PC-9 (cell line): ENCODE measurements at regions of chr2 and their contacts with region 1.

Region 1: DNA sequence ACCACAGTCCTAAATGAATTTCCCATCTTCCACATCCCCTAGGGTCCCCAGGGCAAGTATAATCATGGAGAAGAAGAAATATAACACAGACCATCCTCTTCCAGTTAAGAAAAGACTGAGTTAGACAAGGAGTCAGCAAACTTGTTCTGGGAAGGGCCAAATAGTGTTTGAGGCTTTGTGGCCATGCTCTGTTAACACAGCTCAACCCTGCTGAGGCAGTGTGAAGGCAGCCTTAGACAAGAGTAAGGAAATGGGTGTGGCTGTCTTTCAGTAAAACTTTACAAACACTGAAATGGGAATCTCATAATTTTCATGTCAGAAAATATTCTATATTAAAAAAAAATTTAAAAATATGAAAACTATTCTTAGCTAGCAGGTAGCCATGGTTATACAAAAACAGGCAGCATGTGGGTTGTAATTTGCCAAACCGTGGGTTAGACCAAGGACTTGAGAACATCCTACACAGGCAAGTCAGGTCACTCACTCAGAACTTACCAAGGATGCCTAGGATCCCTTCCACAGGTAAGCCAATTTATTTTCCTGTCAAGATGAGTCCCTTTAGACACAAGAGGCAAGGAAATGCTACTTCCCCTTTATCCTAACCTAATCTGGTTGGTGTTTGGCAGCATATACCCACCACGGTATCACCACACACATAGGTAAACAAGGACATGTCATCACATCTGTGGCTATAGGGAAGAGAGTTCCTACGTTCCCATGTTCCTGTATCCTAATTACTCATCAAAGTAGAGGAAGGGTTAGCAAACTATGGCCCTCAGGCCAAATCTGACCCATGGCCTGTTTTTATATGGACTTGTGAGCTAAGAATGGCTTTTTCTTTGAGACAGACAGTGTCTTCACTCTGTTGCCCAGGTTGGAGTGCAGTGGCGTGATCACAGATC is 31.9 kb downstream of the C2orf74 start:
- DNase-seq: peak in 1 of 2 experiments; percentile 84
- H3K4me3 ChIP-seq: no peak overlapping the region
- H3K27ac ChIP-seq: peak overlapping the region; percentile 70
- H3K4me1 ChIP-seq: peaks cover 17% of the 10 kb centered on the region
- H3K27me3 ChIP-seq: no peaks in the 10 kb centered on the region
- CTCF ChIP-seq: no peak

Region 2: DNA sequence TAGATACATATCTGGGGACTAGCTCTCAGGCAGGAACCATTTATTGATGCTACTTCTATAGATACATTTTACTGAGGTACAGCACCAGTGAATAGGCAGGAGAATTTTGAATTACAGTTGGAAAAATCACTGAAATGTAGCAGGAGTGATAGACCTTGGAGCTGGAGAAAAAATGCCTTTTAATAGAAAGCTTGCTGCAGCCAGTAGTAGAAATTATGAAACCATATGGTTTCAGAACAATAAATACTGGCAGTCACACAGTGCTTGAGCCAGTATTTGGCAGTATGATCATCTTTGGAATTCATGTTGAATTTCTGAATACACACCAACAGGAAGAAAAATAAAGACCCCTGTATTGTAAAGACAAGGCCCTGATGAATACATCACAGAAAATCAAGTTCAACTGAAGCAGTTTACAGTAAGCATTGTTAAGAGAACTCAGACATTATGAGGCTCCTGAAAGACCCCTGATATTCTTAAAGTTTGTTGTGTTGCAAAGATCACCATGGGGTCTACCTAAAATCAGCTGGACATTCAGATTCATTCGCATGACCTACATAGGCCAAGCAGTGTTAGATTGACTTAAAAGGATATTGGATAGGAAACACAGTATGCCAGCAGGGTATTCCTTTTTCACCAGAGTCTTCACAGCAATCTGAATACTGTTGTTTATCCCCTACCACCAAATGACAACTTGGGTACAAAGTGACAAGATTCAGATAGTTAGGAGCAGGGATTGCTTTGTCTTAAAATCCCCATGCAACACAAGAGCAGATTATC is 1650.6 kb after region 1 on chr2:
- CTCF ChIA-PET with region 1: no interaction called
- POLR2A ChIA-PET with region 1: interaction called, 18 read pairs
- intact Hi-C with region 1: no loop called
- DNase-seq: no peak
- H3K4me3 ChIP-seq: no peak overlapping the region
- H3K27ac ChIP-seq: no peak overlapping the region
- H3K4me1 ChIP-seq: no peaks in the 10 kb centered on the region
- H3K27me3 ChIP-seq: no peaks in the 10 kb centered on the region
- CTCF ChIP-seq: no peak